BJ (cell line): ENCODE measurements at regions of chr7 and their contacts with region 1.

Region 1: GRCh38 chr7:30510124-30511075 is 5.8 kb upstream of the GGCT start:
- DNase-seq: no peak
- H3K4me3 ChIP-seq: no peak overlapping the region
- H3K27me3 ChIP-seq: no peaks in the 10 kb centered on the region
- CTCF ChIP-seq: peak; percentile 84

Region 2: DNA sequence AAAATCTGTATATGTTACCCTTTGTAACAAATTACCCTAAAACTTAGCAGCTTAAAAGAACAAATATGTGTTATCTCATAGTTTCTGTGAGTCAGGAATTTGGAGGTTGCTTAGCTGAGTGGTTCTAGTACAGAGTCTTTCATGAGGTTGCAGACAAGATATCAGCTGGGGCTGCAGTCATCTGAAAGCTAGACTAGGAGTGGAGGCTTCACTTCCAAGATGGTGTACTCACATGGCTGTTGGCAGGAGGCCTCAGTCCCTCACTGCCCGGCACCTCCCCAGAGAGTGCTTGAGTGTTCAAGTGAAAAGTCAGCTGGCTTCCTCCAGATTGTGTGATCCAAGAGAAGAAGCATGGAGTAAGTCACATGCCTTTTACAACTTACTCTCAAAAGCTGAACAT is 11.1 kb after region 1 on chr7:
- CTCF ChIA-PET with region 1: interaction called, 16 read pairs
- POLR2A ChIA-PET with region 1: no interaction called
- DNase-seq: no peak
- H3K4me3 ChIP-seq: no peak overlapping the region
- H3K27me3 ChIP-seq: no peaks in the 10 kb centered on the region; the same call in 1 of the 2 replicates
- CTCF ChIP-seq: no peak

Region 3: GRCh38 chr7:30548762-30549344 is 38.5 kb after region 1 on chr7:
- CTCF ChIA-PET with region 1: interaction called, 19 read pairs
- POLR2A ChIA-PET with region 1: no interaction called
- DNase-seq: no peak
- H3K4me3 ChIP-seq: no peak overlapping the region
- H3K27me3 ChIP-seq: no peaks in the 10 kb centered on the region
- CTCF ChIP-seq: peak; percentile 87

Region 4: DNA sequence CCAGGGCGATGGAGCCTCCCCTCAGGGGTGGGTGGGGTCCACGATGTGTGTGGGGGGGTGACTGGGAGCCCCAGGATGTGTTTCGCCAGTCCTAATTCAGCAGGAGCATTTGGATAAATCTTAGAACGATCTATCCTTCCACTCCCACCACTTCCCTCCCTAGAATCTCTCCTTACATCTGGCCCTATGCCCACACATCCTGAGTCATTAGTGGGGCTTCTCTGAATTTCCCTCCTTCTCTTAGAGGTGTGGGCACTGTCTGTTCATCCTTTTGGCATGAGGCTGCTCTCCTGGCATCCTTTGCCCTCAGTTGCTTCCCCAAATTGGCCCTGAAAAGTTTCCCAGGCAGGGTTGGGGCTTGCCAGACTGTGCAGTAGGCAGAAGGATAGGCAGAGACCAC is 455.0 kb after region 1 on chr7:
- CTCF ChIA-PET with region 1: no interaction called
- POLR2A ChIA-PET with region 1: no interaction called
- DNase-seq: no peak
- H3K4me3 ChIP-seq: no peak overlapping the region
- H3K27me3 ChIP-seq: peaks cover 16% of the 10 kb centered on the region
- CTCF ChIP-seq: no peak